ENCODE measurements at regions of chr5 and their contacts with region 1.

Region 1: GRCh38 chr5:175542232-175542965 is 64.0 kb downstream of the SFXN1 start:
- DNase-seq: no peak
- H3K4me3 Mint-ChIP-seq: no peak overlapping the region
- H3K27ac Mint-ChIP-seq: no peak overlapping the region
- H3K4me1 Mint-ChIP-seq: peaks cover 22% of the 10 kb centered on the region
- H3K27me3 Mint-ChIP-seq: peaks cover 21% of the 10 kb centered on the region

Region 2: DNA sequence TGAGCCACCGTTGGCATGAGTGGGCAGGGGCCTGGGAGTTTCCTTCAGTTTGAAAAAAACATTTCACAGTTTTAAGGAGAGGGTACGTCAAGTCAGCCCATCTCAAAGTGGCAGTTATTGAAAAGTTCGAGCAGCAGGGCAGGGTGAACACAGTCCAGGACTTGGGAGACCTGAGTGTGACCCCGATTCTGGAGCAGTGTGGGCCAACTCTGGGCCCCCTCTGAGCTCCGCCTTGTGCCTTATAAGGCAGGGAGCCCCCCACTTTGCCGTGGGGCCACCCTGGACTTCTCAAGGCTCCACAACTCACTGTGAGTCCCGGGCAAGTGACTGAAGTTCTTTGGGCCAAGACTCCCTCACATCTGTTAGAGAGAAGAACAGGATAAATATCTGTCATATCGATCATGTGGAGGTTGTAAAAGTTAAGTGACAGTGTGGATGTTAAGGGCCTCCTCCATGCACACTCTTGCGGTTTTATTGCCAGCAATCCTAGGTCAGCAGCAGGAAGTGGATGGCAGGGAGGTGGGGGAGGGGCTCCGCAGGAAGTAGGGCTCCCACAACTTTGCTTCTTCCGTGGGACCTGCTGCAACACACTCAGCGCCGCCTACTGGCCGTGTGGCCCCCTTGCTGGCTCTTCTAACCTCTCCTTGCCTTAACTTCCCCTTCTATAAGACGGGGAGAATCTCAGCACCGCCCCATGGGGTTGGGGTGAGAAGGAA is 153.9 kb after region 1 on chr5:
- CTCF ChIA-PET with region 1: interaction called, 11 read pairs
- DNase-seq: peak; percentile 85
- H3K4me3 Mint-ChIP-seq: peak overlapping the region; percentile 32
- H3K27ac Mint-ChIP-seq: peak overlapping the region; percentile 86
- H3K4me1 Mint-ChIP-seq: peaks cover 30% of the 10 kb centered on the region
- H3K27me3 Mint-ChIP-seq: no peaks in the 10 kb centered on the region

Measured in activated naive CD4-positive, alpha-beta T cell treated with anti-CD3 and anti-CD28 coated beads, Interleukin-2, amount 10 ng/mL, durations not matched to agents 7 days and 5 days (primary cell).